ENCODE measurements at regions of chr2 and their contacts with region 1.

Region 1: DNA sequence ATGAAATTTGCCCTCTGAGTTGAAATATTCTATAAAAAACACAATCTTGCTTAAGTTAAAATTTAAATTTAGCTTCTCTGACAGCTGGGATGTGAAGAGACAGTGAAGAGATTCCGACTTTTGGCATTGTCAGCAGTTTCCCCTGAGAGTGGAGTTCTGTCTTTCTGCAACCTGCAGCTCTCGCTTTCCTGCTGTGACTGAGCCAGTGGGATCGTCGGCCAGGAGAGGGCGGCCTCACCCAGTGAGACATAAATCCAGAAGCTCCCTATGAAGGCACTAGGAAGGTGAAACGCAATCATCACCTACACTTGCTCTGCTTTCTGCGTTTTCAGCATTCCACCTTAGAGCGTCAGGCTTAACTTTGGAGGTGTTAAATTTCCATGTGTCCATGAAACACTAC is 75.4 kb upstream of the HNMT start:
- DNase-seq: peak; percentile 75 to 76
- H3K4me3 ChIP-seq: no peak overlapping the region
- H3K4me3 Mint-ChIP-seq: no peak overlapping the region
- H3K27ac Mint-ChIP-seq: no peak overlapping the region
- H3K4me1 ChIP-seq: peaks cover 12% of the 10 kb centered on the region
- H3K4me1 Mint-ChIP-seq: peaks cover 11% of the 10 kb centered on the region
- H3K27me3 ChIP-seq: no peaks in the 10 kb centered on the region
- H3K27me3 Mint-ChIP-seq: no peaks in the 10 kb centered on the region
- CTCF ChIP-seq: peak; percentile 69 to 81

Region 2: GRCh38 chr2:137826373-137827372 is 62.2 kb before region 1 on chr2:
- CTCF ChIA-PET with region 1: no interaction called
- POLR2A ChIA-PET with region 1: no interaction called
- intact Hi-C with region 1: no loop called
- DNase-seq: no peak
- H3K4me3 ChIP-seq: no peak overlapping the region
- H3K4me3 Mint-ChIP-seq: no peak overlapping the region
- H3K27ac Mint-ChIP-seq: no peak overlapping the region
- H3K4me1 ChIP-seq: no peaks in the 10 kb centered on the region
- H3K4me1 Mint-ChIP-seq: no peaks in the 10 kb centered on the region
- H3K27me3 ChIP-seq: peaks cover 1% of the 10 kb centered on the region
- H3K27me3 Mint-ChIP-seq: no peaks in the 10 kb centered on the region
- CTCF ChIP-seq: no peak

Region 3: DNA sequence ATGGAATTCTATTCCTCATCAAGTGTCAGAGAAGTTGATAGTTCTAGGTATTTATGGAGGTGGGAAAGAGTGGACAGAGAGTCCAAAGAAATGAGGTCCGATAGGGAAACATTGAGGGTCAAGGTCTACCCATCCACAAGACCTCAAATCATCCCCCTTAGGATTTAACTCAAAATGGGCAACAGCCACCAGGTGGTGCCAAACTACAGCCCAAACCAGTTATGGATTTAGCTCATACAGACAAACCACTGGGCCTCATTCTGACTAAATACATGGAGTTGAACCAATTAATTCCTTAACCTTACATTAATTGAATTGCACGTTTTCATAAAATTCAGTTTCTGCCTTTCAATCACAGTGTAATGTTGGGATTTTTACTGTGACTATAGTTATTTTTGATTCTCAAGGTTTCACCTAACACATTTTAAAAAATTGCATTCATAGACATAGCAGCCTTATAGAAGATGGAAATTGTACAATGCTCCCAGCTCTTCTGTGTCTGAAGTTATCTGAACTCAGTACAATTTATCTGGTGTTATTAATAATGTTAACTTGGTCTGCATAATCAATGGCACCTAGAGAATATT is 22.8 kb before region 1 on chr2:
- CTCF ChIA-PET with region 1: interaction called, 29 read pairs
- POLR2A ChIA-PET with region 1: no interaction called
- intact Hi-C with region 1: loop called (anchors 1 kb)
- DNase-seq: peak; percentile 73 to 79
- H3K4me3 ChIP-seq: no peak overlapping the region
- H3K4me3 Mint-ChIP-seq: no peak overlapping the region
- H3K27ac Mint-ChIP-seq: no peak overlapping the region
- H3K4me1 ChIP-seq: peaks cover 14% of the 10 kb centered on the region
- H3K4me1 Mint-ChIP-seq: no peaks in the 10 kb centered on the region
- H3K27me3 ChIP-seq: no peaks in the 10 kb centered on the region
- H3K27me3 Mint-ChIP-seq: no peaks in the 10 kb centered on the region
- CTCF ChIP-seq: peak; percentile 86 to 89

Region 4: GRCh38 chr2:137872577-137872976 is 16.3 kb before region 1 on chr2:
- CTCF ChIA-PET with region 1: interaction called, 11 read pairs
- POLR2A ChIA-PET with region 1: no interaction called
- intact Hi-C with region 1: no loop called
- DNase-seq: no peak
- H3K4me3 ChIP-seq: no peak overlapping the region
- H3K4me3 Mint-ChIP-seq: no peak overlapping the region
- H3K27ac Mint-ChIP-seq: peak overlapping the region; percentile 71
- H3K4me1 ChIP-seq: peaks cover 50% of the 10 kb centered on the region
- H3K4me1 Mint-ChIP-seq: peaks cover 29% of the 10 kb centered on the region
- H3K27me3 ChIP-seq: no peaks in the 10 kb centered on the region
- H3K27me3 Mint-ChIP-seq: no peaks in the 10 kb centered on the region
- CTCF ChIP-seq: no peak

Region 5: DNA sequence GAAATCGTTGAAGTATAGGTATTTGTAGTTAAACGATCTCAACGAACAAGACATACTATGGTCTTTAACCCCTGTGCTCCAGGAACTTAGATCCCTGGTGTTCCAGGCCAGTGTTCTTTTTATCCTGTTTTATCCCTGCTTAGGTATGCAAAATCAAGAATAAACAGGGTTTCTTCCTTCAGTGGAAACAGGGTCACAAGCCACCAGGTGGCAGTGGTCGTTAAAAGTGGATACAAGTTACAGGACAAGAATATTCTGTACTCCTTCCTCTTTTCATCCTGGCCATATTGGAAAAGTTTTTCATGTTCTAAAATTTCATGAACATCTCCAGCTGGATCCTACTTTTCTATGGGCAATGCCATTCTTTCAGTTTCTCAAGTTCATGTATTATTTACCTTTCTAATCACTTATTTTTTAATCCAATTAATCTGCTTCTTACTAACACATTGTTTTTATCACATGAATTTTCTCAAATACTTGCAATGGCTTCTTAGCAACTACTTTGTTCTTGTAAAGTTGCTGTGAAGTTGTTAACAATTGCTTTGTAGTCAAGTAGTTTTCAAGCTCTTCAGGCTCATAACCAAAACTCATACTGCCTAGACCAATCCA is 59.0 kb after region 1 on chr2:
- CTCF ChIA-PET with region 1: no interaction called
- POLR2A ChIA-PET with region 1: no interaction called
- intact Hi-C with region 1: no loop called
- DNase-seq: peak; percentile 71 to 75
- H3K4me3 ChIP-seq: no peak overlapping the region
- H3K4me3 Mint-ChIP-seq: no peak overlapping the region
- H3K27ac Mint-ChIP-seq: peak overlapping the region; percentile 8
- H3K4me1 ChIP-seq: peaks cover 16% of the 10 kb centered on the region
- H3K4me1 Mint-ChIP-seq: peaks cover 34% of the 10 kb centered on the region
- H3K27me3 ChIP-seq: no peaks in the 10 kb centered on the region
- H3K27me3 Mint-ChIP-seq: no peaks in the 10 kb centered on the region
- CTCF ChIP-seq: peak; percentile 54 to 57

Measured in Caco-2 (cell line).